Activated CD8-positive, alpha-beta T cell treated with anti-CD3 and anti-CD28 coated beads for 36 hours (primary cell): ENCODE measurements at regions of chr17 and their contacts with region 1.

Region 1: GRCh38 chr17:81484195-81484979 is 28.2 kb downstream of the ACTG1 start:
- DNase-seq: peak; percentile 90
- ATAC-seq: peak; percentile 61
- H3K4me3 Mint-ChIP-seq: peak overlapping the region; percentile 21
- H3K27ac Mint-ChIP-seq: no peak overlapping the region
- H3K4me1 Mint-ChIP-seq: peaks cover 28% of the 10 kb centered on the region
- H3K27me3 Mint-ChIP-seq: peaks cover 24% of the 10 kb centered on the region
- CTCF ChIP-seq: peak; percentile 98

Region 2: DNA sequence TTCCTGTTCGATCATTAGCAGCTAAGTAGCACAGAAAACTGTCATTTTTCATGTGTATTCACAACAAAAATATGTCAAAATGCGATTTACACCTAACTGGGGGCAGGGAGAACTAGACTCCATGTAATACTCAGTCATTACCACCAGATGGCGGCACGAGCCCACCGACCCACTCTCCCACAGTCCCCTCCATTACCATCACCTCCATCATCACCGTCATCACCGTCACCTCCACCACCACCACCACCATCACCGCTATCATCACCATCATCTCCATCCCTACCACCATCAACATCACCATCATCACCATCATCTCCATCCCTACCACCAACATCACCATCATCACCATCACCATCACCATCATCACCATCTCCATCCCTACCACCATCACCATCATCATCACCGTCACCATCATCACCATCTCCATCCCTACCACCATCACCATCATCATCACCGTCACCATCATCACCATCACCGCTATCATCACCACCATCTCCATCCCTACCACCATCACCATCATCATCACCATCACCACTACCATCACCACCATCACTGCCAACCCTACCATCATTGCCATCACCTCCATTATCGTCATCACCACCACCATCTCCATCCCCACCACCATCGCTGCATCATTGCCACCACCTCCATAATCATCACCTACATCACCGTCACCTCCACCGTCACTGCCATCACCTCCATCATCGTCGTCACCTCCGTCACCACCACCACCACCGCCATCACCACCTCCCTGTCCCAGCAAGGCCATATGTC is 230.8 kb before region 1 on chr17:
- CTCF ChIA-PET with region 1: interaction called, 21 read pairs
- POLR2A ChIA-PET with region 1: interaction called, 3 read pairs
- intact Hi-C with region 1: loop called (anchors 5 kb)
- DNase-seq: peak; percentile 69
- ATAC-seq: peak; percentile 83
- H3K4me3 Mint-ChIP-seq: no peak overlapping the region
- H3K27ac Mint-ChIP-seq: no peak overlapping the region
- H3K4me1 Mint-ChIP-seq: peaks cover 11% of the 10 kb centered on the region
- H3K27me3 Mint-ChIP-seq: no peaks in the 10 kb centered on the region
- CTCF ChIP-seq: peak; percentile 85

Region 3: GRCh38 chr17:81397314-81398175 is 86.8 kb before region 1 on chr17:
- CTCF ChIA-PET with region 1: interaction called, 29 read pairs
- POLR2A ChIA-PET with region 1: interaction called, 3 read pairs
- intact Hi-C with region 1: no loop called
- DNase-seq: peak; percentile 39
- ATAC-seq: no peak
- H3K4me3 Mint-ChIP-seq: peak overlapping the region; percentile 5
- H3K27ac Mint-ChIP-seq: no peak overlapping the region
- H3K4me1 Mint-ChIP-seq: peaks cover 28% of the 10 kb centered on the region
- H3K27me3 Mint-ChIP-seq: peaks cover 57% of the 10 kb centered on the region
- CTCF ChIP-seq: peak; percentile 38

Region 4: GRCh38 chr17:81466564-81467472 is 17.6 kb before region 1 on chr17:
- CTCF ChIA-PET with region 1: no interaction called
- POLR2A ChIA-PET with region 1: no interaction called
- intact Hi-C with region 1: no loop called
- DNase-seq: no peak
- ATAC-seq: no peak
- H3K4me3 Mint-ChIP-seq: no peak overlapping the region
- H3K27ac Mint-ChIP-seq: no peak overlapping the region
- H3K4me1 Mint-ChIP-seq: no peaks in the 10 kb centered on the region
- H3K27me3 Mint-ChIP-seq: no peaks in the 10 kb centered on the region
- CTCF ChIP-seq: no peak

Region 5: DNA sequence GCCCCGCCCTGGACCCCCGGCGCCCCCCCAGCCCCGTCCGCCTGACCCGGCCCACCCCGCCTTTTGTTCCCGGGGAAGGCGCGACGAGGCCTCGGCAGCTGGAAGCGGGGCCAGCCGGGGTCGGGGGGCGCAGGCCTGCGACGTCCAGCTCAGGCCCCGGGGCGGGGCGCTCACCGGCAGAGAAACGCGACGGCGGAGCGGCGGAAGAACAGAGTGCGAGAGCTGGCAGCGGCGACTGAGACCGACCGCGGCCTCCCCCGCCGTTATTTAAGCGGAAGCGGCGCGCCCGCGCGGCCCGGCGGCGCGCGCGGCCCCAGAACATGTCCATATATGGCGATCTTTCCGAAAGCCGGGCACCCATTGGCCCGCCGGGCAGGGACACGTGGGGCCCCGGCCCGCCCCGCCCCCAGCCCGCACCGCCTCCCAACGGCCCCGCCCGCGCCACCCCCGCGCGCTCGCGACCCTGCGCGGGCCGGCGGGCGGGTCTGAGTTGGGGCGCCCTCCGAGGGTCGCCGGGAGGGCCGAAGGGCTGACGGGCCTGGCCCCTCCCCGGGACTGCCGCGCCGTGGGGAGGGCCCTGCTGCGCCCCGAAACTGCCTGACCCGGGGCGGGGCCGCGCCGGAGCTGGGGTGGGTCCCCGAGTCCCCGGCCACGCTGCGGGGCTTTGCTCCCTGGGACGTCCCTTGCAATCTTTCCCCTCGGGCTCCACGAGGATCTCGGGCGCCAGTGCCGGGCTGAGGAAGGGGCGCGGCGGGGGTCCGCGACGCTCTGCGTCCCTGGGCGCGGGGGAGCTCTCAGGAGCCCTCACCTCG is 28.4 kb after region 1 on chr17 and contains the start of gene ACTG1:
- CTCF ChIA-PET with region 1: interaction called, 28 read pairs
- POLR2A ChIA-PET with region 1: interaction called, 33 read pairs
- intact Hi-C with region 1: no loop called
- DNase-seq: peak; percentile 91
- ATAC-seq: peak; percentile 57
- H3K4me3 Mint-ChIP-seq: peak within 1 kb of the TSS; percentile 97
- H3K27ac Mint-ChIP-seq: peak within 1 kb of the TSS; percentile 92
- H3K4me1 Mint-ChIP-seq: peaks cover 27% of the 10 kb centered on the region
- H3K27me3 Mint-ChIP-seq: no peaks in the 10 kb centered on the region
- CTCF ChIP-seq: no peak
- total RNA-seq, gene ACTG1: 4,606 to 4,756 TPM